T-cell (primary cell): ENCODE measurements at regions of chr18 and their contacts with region 1.

Region 1: GRCh38 chr18:28136071-28136470 is 40.9 kb downstream of the CDH2 start:
- DNase-seq: no peak
- ATAC-seq: no peak
- H3K4me3 ChIP-seq: no peak overlapping the region
- H3K4me3 Mint-ChIP-seq: no peak overlapping the region
- H3K27ac ChIP-seq: no peak overlapping the region
- H3K27ac Mint-ChIP-seq: no peak overlapping the region
- H3K4me1 ChIP-seq: no peaks in the 10 kb centered on the region
- H3K4me1 Mint-ChIP-seq: no peaks in the 10 kb centered on the region
- H3K27me3 ChIP-seq: no peaks in the 10 kb centered on the region
- H3K27me3 Mint-ChIP-seq: no peaks in the 10 kb centered on the region

Region 2: GRCh38 chr18:28075501-28075900 is 60.6 kb before region 1 on chr18:
- CTCF ChIA-PET with region 1: no interaction called
- POLR2A ChIA-PET with region 1: no interaction called
- DNase-seq: no peak
- ATAC-seq: no peak
- H3K4me3 ChIP-seq: no peak overlapping the region
- H3K4me3 Mint-ChIP-seq: no peak overlapping the region
- H3K27ac ChIP-seq: no peak overlapping the region
- H3K27ac Mint-ChIP-seq: no peak overlapping the region
- H3K4me1 ChIP-seq: no peaks in the 10 kb centered on the region
- H3K4me1 Mint-ChIP-seq: no peaks in the 10 kb centered on the region
- H3K27me3 ChIP-seq: no peaks in the 10 kb centered on the region
- H3K27me3 Mint-ChIP-seq: no peaks in the 10 kb centered on the region

Region 3: DNA sequence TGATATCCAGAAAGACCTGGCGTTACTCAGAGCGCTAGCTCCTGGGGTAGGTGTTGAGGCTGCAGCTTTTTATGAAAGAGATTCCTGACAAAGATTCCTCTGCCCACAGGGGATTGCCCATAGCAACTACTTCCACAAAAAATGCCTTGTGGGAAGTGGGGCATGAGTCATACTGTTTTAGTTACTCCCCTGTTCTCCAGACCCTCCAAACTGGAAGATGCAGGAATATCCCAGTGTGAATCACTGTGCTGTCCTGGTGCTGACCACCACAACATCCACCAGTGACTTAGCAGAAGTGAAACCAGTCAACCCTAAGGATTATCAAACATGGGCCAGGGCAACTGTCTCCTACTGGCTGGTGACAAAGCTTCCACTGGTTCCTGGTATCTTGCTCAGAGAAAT is 20.9 kb before region 1 on chr18:
- CTCF ChIA-PET with region 1: no interaction called
- POLR2A ChIA-PET with region 1: no interaction called
- DNase-seq: no peak
- ATAC-seq: no peak
- H3K4me3 ChIP-seq: no peak overlapping the region
- H3K4me3 Mint-ChIP-seq: no peak overlapping the region
- H3K27ac ChIP-seq: no peak overlapping the region
- H3K27ac Mint-ChIP-seq: no peak overlapping the region
- H3K4me1 ChIP-seq: no peaks in the 10 kb centered on the region
- H3K4me1 Mint-ChIP-seq: no peaks in the 10 kb centered on the region
- H3K27me3 ChIP-seq: no peaks in the 10 kb centered on the region
- H3K27me3 Mint-ChIP-seq: no peaks in the 10 kb centered on the region

Region 4: DNA sequence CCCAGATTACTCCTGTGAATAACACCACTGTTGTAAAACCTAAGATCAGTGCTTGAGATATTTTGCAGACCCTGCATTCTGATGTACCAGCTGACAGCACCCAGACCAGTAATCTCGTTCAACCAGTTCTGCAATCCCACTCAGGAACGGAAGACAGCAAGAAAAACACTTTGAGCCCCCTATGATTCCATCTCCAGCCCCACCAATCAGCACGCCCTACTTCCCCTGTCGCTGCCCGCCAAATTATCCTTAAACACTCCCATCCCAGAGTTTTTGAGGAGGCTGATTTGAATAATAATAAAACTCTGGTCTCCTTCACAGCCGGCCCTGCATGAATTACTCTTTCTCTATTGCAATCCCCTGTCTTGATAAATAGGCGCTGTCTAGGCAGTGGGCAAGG is 214.8 kb after region 1 on chr18:
- CTCF ChIA-PET with region 1: interaction called in 1 of 2 experiments, 10 read pairs
- POLR2A ChIA-PET with region 1: no interaction called
- DNase-seq: no peak
- ATAC-seq: no peak
- H3K4me3 ChIP-seq: no peak overlapping the region
- H3K4me3 Mint-ChIP-seq: no peak overlapping the region
- H3K27ac ChIP-seq: no peak overlapping the region
- H3K27ac Mint-ChIP-seq: no peak overlapping the region
- H3K4me1 ChIP-seq: no peaks in the 10 kb centered on the region
- H3K4me1 Mint-ChIP-seq: no peaks in the 10 kb centered on the region
- H3K27me3 ChIP-seq: no peaks in the 10 kb centered on the region
- H3K27me3 Mint-ChIP-seq: no peaks in the 10 kb centered on the region